Astrocyte of the cerebellum (primary cell): ENCODE measurements at regions of chr6 and their contacts with region 1.

Region 1: DNA sequence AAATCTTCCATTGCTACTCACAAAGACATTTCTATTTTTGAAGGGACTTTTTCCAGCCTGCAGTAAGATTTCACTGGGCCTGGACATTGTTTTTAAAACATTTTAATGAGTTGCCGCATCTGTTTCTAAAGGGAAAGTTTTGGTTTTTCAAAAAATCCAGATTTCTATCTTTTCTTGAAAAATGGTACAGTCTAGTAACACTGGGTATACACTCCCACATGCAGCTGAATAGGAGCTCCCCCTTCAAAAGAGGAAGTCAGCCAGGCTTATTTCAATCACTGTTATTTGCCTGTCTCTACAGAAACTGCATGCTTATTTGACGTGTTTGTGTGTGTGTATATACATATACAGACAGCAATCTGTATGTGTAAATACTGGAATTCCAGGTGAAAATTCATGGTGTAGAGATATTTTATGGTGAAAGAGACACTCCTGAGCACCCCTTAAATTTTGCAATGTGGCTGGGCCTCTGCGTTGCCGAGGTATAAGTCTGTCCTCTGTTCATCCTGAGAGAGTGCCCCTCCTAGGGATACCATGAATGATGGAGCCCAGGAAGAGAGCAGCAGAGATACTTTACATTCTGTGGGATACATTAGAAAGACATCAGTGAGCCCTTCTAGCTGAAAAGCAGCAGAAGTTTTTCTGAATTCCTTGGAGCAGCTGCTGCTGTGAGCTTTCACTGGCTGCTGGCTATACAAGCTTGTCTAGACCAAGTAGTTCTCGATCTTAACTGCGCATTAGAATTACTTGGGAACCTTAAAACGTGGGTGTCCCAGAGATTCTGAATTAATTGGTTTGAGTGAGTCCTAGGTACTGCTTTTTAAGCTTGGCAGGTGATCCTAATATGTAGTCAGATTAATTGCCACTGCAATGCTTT is 12.0 kb upstream of the ABRACL start:
- DNase-seq: no peak
- H3K4me3 ChIP-seq: no peak overlapping the region
- CTCF ChIP-seq: no peak

Region 2: DNA sequence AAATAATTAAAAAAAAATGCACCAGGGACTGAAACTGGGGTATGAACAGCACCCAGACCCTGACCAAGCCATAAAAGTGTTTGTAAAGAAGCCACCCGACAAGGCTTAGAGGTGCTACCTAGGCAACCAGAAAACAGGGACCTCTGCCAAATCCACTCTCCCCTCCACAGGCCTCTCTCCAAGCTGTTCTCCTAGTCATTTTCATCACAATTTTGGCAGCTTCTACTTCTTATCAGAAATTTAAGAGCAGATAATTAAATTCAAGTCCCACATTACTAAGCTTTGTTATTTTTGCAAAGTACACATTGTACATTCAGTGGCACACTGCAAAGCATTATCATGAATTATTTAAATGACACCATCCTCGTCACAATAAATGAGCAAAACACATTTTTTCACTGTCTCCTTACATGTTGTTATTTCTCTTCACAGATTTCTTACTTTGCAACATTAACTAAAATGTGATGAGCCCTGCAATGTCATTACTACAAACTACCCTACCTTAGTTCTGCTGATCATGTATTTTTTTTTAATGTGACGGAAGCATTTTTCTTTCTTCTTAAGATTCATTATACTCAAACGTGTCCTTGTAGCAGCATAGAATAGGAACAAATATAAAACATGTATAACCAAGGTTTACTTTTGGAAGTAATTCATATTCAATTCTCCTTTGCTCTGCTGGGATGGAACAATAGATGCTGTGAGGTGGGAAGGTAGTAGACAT is 182.6 kb before region 1 on chr6:
- in situ Hi-C with region 1: no loop called
- DNase-seq: peak; percentile 37
- H3K4me3 ChIP-seq: no peak overlapping the region
- CTCF ChIP-seq: no peak

Region 3: DNA sequence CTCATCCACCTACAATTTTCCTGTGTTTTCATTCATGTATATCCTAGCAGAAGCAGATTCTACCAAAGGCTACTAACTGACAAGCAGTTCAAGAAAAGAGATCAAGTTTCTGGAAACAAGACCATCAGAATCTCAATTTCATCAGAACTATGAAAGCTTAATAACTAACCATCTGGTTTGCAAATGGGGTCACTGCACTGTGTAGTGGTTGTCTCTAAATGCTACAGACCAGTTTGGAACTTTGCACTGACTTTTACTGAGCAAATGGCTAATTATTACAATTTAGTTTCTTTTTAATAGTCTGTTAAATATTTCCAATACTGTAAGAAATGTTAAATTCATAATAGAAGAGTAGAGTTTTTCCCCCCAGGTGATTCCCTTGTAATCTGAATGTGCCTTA is 93.0 kb before region 1 on chr6:
- in situ Hi-C with region 1: no loop called
- DNase-seq: no peak
- H3K4me3 ChIP-seq: no peak overlapping the region
- CTCF ChIP-seq: no peak

Region 4: DNA sequence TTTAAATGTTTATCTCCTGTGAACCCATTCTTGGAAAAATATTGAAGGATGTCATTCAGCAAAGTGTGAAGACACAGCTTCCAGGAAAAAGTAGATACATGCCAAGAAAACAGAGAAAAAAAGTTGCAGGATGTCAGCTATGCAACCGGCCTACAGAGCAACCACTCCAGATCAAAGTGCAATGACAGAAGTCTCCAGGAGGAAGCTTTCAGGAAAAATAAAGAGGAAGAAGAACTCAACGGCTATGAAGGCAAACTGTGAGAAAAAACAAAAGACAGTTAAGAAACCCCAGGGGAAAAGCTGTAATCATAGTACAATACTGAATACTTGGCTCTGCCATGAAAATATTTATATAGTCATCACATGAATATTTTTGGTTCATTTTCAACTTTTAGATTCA is 59.1 kb before region 1 on chr6:
- in situ Hi-C with region 1: no loop called
- DNase-seq: no peak
- H3K4me3 ChIP-seq: no peak overlapping the region
- CTCF ChIP-seq: no peak

Region 5: DNA sequence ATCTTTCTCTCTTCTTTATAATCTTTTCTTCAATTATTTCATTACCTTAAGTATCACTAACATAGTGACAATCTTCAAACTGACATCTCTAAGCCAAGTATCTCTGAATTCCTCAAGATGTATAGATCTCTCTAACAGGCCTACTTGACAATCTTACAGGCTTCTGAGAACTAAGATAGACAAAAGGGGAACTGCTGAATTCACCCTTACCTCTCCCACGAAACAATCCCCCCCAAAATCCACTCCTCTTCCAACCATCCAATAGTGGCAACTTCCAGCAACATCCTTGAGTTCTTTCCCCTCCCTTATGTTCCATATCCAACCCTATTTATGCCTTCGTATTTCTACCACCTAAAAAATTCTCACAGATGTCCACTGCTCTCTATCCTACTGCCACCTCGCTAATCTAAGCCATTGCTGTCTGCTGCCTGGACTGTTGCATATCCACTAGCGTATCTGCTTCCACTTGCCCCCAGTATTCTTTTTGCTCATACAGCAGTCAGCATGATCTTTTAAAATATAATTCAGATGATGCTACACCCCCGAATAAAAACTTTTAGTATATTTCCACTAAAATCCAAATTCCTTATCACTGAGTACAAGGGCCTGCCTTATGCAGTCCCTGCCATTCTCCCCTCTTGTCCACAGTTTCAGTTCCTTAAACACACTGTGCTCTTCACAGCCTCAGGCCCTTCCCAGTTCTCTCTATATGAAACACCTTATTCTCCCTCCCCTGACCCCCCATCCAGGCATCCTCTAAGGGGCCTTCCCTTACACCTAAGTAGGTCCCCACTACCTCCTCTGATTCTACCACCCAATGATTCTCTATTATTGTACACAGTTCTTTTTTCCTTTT is 36.5 kb before region 1 on chr6:
- in situ Hi-C with region 1: loop called (anchors 5 kb)
- DNase-seq: no peak
- H3K4me3 ChIP-seq: no peak overlapping the region
- CTCF ChIP-seq: no peak